Gastrocnemius medialis (tissue), 4 donors: ENCODE measurements at regions of chr16 and their contacts with region 1.

Region 1: DNA sequence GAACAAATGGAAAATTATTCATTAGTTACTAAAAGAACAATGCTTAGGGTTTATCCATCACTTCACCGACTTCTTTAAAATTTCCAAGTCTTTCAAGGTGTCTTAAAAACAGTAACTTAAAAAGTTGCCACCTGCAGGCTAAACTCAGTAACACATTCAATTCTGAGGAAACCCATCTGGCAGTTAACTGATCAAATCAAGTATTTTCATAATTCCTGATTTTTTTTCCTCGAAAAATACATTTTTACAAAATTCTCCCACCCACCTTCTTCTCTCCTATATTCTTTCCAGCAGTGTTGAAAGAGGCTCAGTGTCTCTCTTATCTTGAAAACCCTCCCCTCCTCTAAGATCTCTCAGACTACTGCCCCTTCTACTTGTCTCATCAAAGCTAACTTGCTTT is 29.9 kb downstream of the PARN start:
- DNase-seq: no peak
- ATAC-seq: no peak
- H3K4me3 ChIP-seq: no peak overlapping the region
- H3K27ac ChIP-seq: no peak overlapping the region
- H3K4me1 ChIP-seq: no peaks in the 10 kb centered on the region
- H3K27me3 ChIP-seq: no peaks in the 10 kb centered on the region
- CTCF ChIP-seq: peak in 3 of 5 experiments; percentile 17 to 40 (median 24)
- POLR2A ChIP-seq: no peak

Region 2: DNA sequence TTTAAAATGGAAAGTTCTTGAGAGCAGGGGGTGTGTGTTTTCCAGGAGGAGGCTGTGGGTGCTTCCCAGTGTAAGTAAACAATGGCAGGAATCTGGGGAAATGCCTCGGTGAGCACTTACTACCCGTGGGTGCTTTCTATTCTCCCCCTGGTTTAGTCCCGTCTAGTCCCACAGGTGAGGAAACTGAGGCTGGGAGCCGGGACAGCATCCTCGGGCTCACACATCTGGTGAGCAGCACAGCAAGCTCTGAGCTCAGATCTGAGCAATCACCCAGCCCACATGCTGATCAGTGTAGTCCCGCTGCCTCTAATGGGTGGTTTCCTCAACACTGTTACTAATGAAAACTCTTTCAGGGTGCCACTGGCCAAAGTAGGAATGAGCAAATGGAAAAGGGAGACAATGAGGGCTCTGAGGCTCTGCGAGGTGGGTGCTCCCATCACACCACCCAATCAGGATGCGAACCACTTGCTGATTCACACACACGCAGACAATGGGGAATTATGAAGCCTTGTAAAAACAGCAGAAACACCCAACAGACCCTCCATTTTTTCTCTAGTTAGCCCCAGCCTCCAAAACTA is 172.7 kb before region 1 on chr16:
- in situ Hi-C with region 1: no loop called
- intact Hi-C with region 1: no loop called
- DNase-seq: no peak
- ATAC-seq: no peak
- H3K4me3 ChIP-seq: no peak overlapping the region
- H3K27ac ChIP-seq: peak overlapping the region in 1 of 4 donors; percentile 23
- H3K4me1 ChIP-seq: peaks cover 31 to 37% of the 10 kb centered on the region in 2 donors
- H3K27me3 ChIP-seq: no peaks in the 10 kb centered on the region
- CTCF ChIP-seq: no peak
- POLR2A ChIP-seq: no peak

Region 3: GRCh38 chr16:14545346-14545884 is 54.7 kb before region 1 on chr16:
- in situ Hi-C with region 1: no loop called
- intact Hi-C with region 1: loop called (anchors 2 kb)
- DNase-seq: no peak
- ATAC-seq: no peak
- H3K4me3 ChIP-seq: no peak overlapping the region
- H3K27ac ChIP-seq: no peak overlapping the region
- H3K4me1 ChIP-seq: peaks cover 13 to 15% of the 10 kb centered on the region in 2 donors
- H3K27me3 ChIP-seq: no peaks in the 10 kb centered on the region
- CTCF ChIP-seq: no peak
- POLR2A ChIP-seq: no peak